ENCODE measurements at regions of chr17 and their contacts with region 1.

Region 1: GRCh38 chr17:75109407-75110233 is at the start of gene ARMC7:
- DNase-seq: peak; percentile 88
- H3K4me3 ChIP-seq: peak within 1 kb of the TSS; percentile 74
- H3K27ac ChIP-seq: peak within 1 kb of the TSS; percentile 43
- H3K4me1 ChIP-seq: peaks cover 12% of the 10 kb centered on the region
- H3K27me3 ChIP-seq: no peaks in the 10 kb centered on the region
- CTCF ChIP-seq: no peak
- total RNA-seq, gene ARMC7: 11.8 and 12.3 TPM in 2 replicates

Region 2: DNA sequence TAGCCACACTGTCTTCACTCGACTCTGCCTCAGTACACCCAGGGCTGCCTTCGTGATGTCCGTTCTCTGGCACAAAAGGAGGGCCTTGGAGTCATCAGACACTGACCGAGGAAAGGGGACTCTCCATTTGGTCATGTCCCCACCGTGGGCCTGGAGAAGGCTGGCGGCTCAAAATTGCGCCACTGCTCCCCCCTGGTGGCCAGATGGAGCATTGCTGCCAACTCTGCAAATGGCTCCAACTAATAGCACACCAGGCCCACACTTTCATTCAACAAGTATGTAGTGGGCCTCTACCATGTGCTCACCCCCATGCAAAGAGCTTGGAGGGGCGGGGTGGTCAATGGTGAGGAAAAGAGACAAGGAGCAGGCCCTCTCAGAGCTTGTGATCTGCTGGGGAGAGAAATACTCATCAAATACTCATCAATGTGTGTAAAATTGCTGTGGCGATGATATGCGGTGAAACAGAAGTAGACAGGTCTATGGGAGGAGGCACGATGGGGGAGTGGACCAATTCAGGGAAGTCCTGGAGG is 244.7 kb before region 1 on chr17:
- CTCF ChIA-PET with region 1: no interaction called
- POLR2A ChIA-PET with region 1: no interaction called
- intact Hi-C with region 1: no loop called
- DNase-seq: peak; percentile 82
- H3K4me3 ChIP-seq: no peak overlapping the region
- H3K27ac ChIP-seq: no peak overlapping the region
- H3K4me1 ChIP-seq: peaks cover 19% of the 10 kb centered on the region
- H3K27me3 ChIP-seq: peaks cover 14% of the 10 kb centered on the region
- CTCF ChIP-seq: peak; percentile 98

Region 3: DNA sequence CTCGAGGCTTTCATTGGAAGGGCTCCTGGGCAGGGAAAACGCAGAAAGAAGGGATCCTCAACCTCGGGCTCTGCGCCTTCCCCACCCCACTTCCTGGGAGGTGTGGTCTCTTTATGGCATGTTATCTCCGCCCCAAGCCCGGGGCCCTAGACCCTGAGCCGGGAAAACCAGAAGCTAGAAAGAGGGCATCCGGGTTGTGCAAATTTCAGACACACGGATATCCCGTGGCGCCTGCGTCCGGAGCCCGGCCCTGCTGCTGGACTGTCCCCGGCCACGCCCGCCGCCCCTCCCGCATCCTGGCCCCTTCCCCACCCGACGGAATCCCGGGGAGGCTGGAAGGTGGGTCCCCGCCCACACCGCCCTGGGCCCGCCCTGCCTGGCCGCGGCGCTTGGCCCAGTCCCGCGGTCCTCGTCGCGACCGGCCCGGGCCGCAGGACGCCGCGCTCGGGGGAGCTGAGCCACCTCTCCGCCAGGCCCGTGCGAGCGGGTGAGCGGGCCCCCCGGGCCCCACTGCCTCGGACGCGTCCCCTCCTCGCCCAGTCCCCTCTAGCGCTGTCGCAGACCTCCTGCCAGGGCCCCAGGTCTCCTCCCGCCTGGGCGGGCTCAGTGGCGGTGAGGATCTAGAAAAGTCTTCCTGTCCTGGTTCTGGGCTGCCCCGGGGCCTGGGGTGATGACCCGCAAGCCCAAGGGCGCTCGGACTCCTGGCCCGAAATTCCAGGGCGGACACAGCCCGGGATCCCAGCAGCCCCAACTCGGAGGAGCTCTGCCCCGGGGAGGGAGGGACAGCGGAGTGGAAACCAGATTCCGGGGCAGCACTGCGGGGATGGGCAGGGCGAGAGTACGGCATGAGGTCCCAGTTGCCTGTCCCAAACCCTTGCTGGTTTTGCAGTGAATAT is 21.8 kb before region 1 on chr17 and contains the start of gene SLC16A5:
- CTCF ChIA-PET with region 1: no interaction called
- POLR2A ChIA-PET with region 1: interaction called, 17 read pairs
- intact Hi-C with region 1: no loop called
- DNase-seq: peak; percentile 74
- H3K4me3 ChIP-seq: peak within 1 kb of the TSS; percentile 52
- H3K27ac ChIP-seq: peak within 1 kb of the TSS; percentile 56
- H3K4me1 ChIP-seq: peaks cover 4% of the 10 kb centered on the region
- H3K27me3 ChIP-seq: no peaks in the 10 kb centered on the region
- CTCF ChIP-seq: no peak
- total RNA-seq, gene SLC16A5: 0.80 and 3.1 TPM in 2 replicates

Region 4: GRCh38 chr17:75131280-75132017 is 21.8 kb after region 1 on chr17 and contains the start of gene NT5C:
- CTCF ChIA-PET with region 1: interaction called, 4 read pairs
- POLR2A ChIA-PET with region 1: no interaction called
- intact Hi-C with region 1: loop called (anchors 2 kb)
- DNase-seq: peak; percentile 82
- H3K4me3 ChIP-seq: peak within 1 kb of the TSS; percentile 84
- H3K27ac ChIP-seq: peak within 1 kb of the TSS; percentile 89
- H3K4me1 ChIP-seq: peaks cover 12% of the 10 kb centered on the region
- H3K27me3 ChIP-seq: no peaks in the 10 kb centered on the region
- CTCF ChIP-seq: peak; percentile 57
- total RNA-seq, gene NT5C: 43.3 and 50.0 TPM in 2 replicates

Region 5: DNA sequence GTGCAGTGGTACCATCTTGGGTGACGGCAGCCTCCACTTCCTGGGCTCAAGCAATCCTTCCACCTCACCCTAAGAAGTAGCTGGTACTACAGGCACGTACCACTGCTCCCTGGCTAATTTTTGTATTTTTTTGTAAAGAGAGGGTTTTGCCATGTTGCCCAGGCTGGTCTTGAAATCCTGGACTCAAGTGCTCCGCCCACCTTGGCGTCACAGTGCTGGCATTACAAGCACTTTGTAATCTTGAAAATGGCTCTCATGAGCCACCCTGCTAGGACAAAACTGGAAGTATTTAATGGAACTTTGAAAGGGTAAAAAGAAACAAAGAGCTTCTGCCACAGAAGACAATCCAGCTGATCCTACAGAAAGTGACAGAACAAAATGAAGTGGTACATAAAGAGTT is 63.9 kb after region 1 on chr17:
- CTCF ChIA-PET with region 1: interaction called, 12 read pairs
- POLR2A ChIA-PET with region 1: no interaction called
- intact Hi-C with region 1: no loop called
- DNase-seq: no peak
- H3K4me3 ChIP-seq: no peak overlapping the region
- H3K27ac ChIP-seq: no peak overlapping the region
- H3K4me1 ChIP-seq: peaks cover 8% of the 10 kb centered on the region
- H3K27me3 ChIP-seq: no peaks in the 10 kb centered on the region
- CTCF ChIP-seq: no peak

Region 6: GRCh38 chr17:75205037-75205792 is 95.6 kb after region 1 on chr17 and contains the start of gene NUP85:
- CTCF ChIA-PET with region 1: interaction called, 30 read pairs
- POLR2A ChIA-PET with region 1: interaction called, 4 read pairs
- intact Hi-C with region 1: loop called (anchors 2 kb)
- DNase-seq: peak; percentile 98
- H3K4me3 ChIP-seq: peak within 1 kb of the TSS; percentile 76
- H3K27ac ChIP-seq: peak within 1 kb of the TSS; percentile 100
- H3K4me1 ChIP-seq: peaks cover 4% of the 10 kb centered on the region
- H3K27me3 ChIP-seq: no peaks in the 10 kb centered on the region
- CTCF ChIP-seq: no peak
- total RNA-seq, gene NUP85: 140 and 156 TPM in 2 replicates

Region 7: GRCh38 chr17:75412455-75413317 is 303.1 kb after region 1 on chr17:
- CTCF ChIA-PET with region 1: no interaction called
- POLR2A ChIA-PET with region 1: no interaction called
- intact Hi-C with region 1: loop called (anchors 2 kb)
- DNase-seq: peak; percentile 84
- H3K4me3 ChIP-seq: no peak overlapping the region
- H3K27ac ChIP-seq: no peak overlapping the region
- H3K4me1 ChIP-seq: no peaks in the 10 kb centered on the region
- H3K27me3 ChIP-seq: no peaks in the 10 kb centered on the region
- CTCF ChIP-seq: peak; percentile 83

Measured in A673 (cell line).